MCF 10A (cell line): ENCODE measurements at regions of chr10 and their contacts with region 1.

Region 1: DNA sequence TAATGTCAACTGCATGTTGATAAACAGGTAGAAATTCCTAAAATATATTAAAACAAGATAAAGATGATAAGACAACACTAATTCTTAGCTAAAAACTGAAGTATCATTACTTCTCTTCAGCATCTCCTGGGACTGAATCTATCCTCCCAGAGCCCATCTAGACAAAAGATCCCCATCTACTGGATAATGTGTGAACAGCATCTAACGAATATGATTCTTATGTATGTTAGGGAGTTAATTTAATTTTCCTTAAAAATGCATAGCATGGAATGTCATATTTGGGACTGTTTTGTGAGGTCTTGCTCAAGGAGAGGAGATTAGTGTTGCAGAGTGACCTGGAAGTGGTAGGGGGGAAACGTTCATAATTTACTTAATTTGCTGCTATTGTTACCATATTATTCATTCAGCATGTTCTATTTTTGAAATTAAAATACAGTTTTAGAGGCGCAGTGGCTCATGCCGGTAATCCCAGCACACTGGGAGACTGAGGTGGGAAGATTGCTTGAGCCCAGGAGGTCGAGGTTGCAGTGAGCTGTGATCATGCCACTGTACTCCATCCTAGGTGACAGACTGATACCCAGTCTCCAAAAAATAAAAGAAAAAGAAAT is 305.1 kb upstream of the CSTF2T start:
- DNase-seq: peak; percentile 59
- H3K4me3 Mint-ChIP-seq: no peak overlapping the region
- H3K27ac Mint-ChIP-seq: no peak overlapping the region
- H3K4me1 Mint-ChIP-seq: no peaks in the 10 kb centered on the region
- H3K27me3 Mint-ChIP-seq: peaks cover 84% of the 10 kb centered on the region
- CTCF ChIP-seq: peak; percentile 45

Region 2: DNA sequence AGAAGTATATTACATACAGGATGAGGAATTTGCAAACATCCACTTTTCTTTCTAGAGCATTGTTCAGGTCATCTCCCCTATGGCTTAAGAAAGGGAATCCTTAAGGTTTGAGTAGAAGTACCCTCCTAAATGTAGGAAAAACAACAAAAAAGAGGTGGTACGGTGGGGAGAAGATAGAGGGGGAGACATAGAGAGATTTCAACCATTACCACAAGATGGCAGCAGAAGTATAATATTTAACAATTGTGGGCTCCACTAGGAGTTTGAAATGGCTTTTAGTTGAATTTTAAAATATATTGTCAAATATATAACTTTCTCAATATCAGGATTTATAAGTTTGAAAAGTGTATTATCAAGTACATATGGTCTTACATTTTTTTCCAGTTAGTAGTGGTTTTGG is 1002.9 kb before region 1 on chr10:
- CTCF ChIA-PET with region 1: interaction called, 3 read pairs
- POLR2A ChIA-PET with region 1: interaction called, 5 read pairs
- intact Hi-C with region 1: loop called (anchors 5 kb)
- DNase-seq: peak; percentile 32
- H3K4me3 Mint-ChIP-seq: no peak overlapping the region
- H3K27ac Mint-ChIP-seq: no peak overlapping the region
- H3K4me1 Mint-ChIP-seq: no peaks in the 10 kb centered on the region
- H3K27me3 Mint-ChIP-seq: peaks cover 67% of the 10 kb centered on the region
- CTCF ChIP-seq: peak; percentile 46

Region 3: DNA sequence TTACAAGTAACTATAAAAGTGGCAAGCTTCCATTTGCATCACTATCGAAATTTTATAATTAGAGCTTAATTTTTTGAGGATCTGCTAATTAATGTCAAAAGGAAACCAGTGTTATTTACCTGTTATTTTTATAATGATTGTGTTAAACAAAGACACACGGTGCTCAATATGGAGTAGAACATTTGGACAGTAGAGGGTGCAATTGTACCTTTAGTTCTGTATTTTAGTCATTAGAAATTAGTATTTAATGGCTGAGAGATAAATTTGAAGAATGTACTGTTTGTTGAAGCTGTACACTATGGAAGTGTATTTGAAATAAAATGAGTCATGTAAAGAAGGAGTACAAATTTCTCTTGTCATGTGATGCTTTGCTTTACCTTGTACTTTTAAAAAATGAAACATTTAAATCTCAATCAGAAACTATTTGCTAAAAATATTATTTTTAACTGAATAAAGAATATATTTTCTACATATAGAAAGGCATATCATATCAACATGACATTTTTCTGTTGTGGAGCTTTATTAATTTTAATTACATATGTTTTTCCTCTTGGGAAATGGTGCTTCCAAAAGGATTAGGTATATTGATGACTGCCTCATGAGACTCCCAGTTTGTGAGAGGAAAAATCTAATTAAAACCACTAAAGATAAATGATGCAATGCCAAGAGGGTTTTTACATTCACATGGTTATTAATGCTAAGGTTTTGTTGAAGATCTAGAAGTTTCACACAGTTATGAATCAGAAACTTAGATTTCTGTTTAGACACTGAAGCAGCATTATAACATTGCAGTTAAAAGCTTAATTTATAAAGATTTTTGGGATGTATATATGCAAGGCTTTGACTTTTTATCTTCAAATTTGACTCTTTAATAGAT is 940.5 kb before region 1 on chr10:
- CTCF ChIA-PET with region 1: interaction called, 6 read pairs
- POLR2A ChIA-PET with region 1: no interaction called
- intact Hi-C with region 1: loop called (anchors 2 kb)
- DNase-seq: peak; percentile 30
- H3K4me3 Mint-ChIP-seq: no peak overlapping the region
- H3K27ac Mint-ChIP-seq: no peak overlapping the region
- H3K4me1 Mint-ChIP-seq: no peaks in the 10 kb centered on the region
- H3K27me3 Mint-ChIP-seq: peaks cover 60% of the 10 kb centered on the region
- CTCF ChIP-seq: peak; percentile 54

Region 4: GRCh38 chr10:51986516-51986915 is 17.9 kb before region 1 on chr10:
- CTCF ChIA-PET with region 1: interaction called, 10 read pairs
- POLR2A ChIA-PET with region 1: no interaction called
- intact Hi-C with region 1: no loop called
- DNase-seq: no peak
- H3K4me3 Mint-ChIP-seq: no peak overlapping the region
- H3K27ac Mint-ChIP-seq: no peak overlapping the region
- H3K4me1 Mint-ChIP-seq: no peaks in the 10 kb centered on the region
- H3K27me3 Mint-ChIP-seq: peaks cover 35% of the 10 kb centered on the region
- CTCF ChIP-seq: no peak

Region 5: DNA sequence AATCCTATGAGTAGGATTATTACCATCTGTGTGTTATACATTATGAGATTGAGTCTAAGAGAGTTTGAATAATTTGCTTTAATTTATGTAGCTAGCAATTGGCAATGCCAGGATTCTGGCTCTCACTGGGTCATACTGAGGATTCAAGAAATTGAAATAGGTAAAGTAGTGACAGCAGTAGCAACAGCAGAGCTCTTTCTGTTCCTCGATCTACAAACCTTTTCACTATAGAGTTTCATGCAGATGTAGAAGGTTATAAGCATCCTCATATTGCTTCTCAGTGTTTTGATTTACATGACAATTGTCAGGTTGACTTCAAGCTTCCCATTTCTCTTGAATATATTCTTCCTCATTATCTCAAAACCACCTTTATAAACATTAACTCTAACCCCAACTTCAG is 11.0 kb before region 1 on chr10:
- CTCF ChIA-PET with region 1: interaction called, 12 read pairs
- POLR2A ChIA-PET with region 1: no interaction called
- intact Hi-C with region 1: no loop called
- DNase-seq: no peak
- H3K4me3 Mint-ChIP-seq: no peak overlapping the region
- H3K27ac Mint-ChIP-seq: no peak overlapping the region
- H3K4me1 Mint-ChIP-seq: no peaks in the 10 kb centered on the region
- H3K27me3 Mint-ChIP-seq: peaks cover 32% of the 10 kb centered on the region
- CTCF ChIP-seq: no peak

Region 6: GRCh38 chr10:52215745-52216361 is 211.4 kb after region 1 on chr10:
- CTCF ChIA-PET with region 1: interaction called, 7 read pairs
- POLR2A ChIA-PET with region 1: no interaction called
- intact Hi-C with region 1: loop called (anchors 5 kb)
- DNase-seq: peak; percentile 79
- H3K4me3 Mint-ChIP-seq: no peak overlapping the region
- H3K27ac Mint-ChIP-seq: no peak overlapping the region
- H3K4me1 Mint-ChIP-seq: no peaks in the 10 kb centered on the region
- H3K27me3 Mint-ChIP-seq: no peaks in the 10 kb centered on the region
- CTCF ChIP-seq: peak; percentile 74